A549 (cell line): ENCODE measurements at regions of chr17 and their contacts with region 1.

Region 1: GRCh38 chr17:82551779-82552457 is 32.4 kb downstream of the FOXK2 start:
- DNase-seq: peak; percentile 81 to 96
- ATAC-seq: peak; percentile 96 to 97
- H3K4me3 ChIP-seq: no peak overlapping the region
- H3K27ac ChIP-seq: no peak overlapping the region
- H3K4me1 ChIP-seq: peaks cover 27% of the 10 kb centered on the region
- CTCF ChIP-seq: peak; percentile 74
- EP300 ChIP-seq: no peak
- POLR2A ChIP-seq: no peak
- RAD21 ChIP-seq: peak; percentile 73 to 77

Region 2: GRCh38 chr17:82477934-82478333 is 74.0 kb before region 1 on chr17:
- CTCF ChIA-PET with region 1: interaction called, 22 read pairs
- POLR2A ChIA-PET with region 1: no interaction called
- DNase-seq: no peak
- ATAC-seq: no peak
- H3K4me3 ChIP-seq: no peak overlapping the region
- H3K27ac ChIP-seq: no peak overlapping the region
- H3K4me1 ChIP-seq: no peaks in the 10 kb centered on the region
- CTCF ChIP-seq: no peak
- EP300 ChIP-seq: no peak
- POLR2A ChIP-seq: no peak
- RAD21 ChIP-seq: no peak

Region 3: GRCh38 chr17:82494236-82495055 is 57.5 kb before region 1 on chr17:
- CTCF ChIA-PET with region 1: interaction called, 26 read pairs
- POLR2A ChIA-PET with region 1: no interaction called
- DNase-seq: peak; percentile 98 to 100
- ATAC-seq: peak; percentile 81 to 91
- H3K4me3 ChIP-seq: peak overlapping the region; percentile 26; the same call in 1 of the 3 replicates
- H3K27ac ChIP-seq: peak overlapping the region in 1 of 2 experiments; percentile 72; a peak in 3 of 6 replicates
- H3K4me1 ChIP-seq: peaks cover 33% of the 10 kb centered on the region
- CTCF ChIP-seq: peak; percentile 98
- EP300 ChIP-seq: no peak
- POLR2A ChIP-seq: no peak
- RAD21 ChIP-seq: peak in 1 of 2 experiments; percentile 40; a peak in 4 of 5 replicates

Region 4: GRCh38 chr17:82528484-82529265 is 23.2 kb before region 1 on chr17:
- CTCF ChIA-PET with region 1: interaction called, 17 read pairs
- POLR2A ChIA-PET with region 1: no interaction called
- DNase-seq: peak; percentile 82 to 85
- ATAC-seq: peak; percentile 96 to 100
- H3K4me3 ChIP-seq: no peak overlapping the region
- H3K27ac ChIP-seq: no peak overlapping the region
- H3K4me1 ChIP-seq: peaks cover 51% of the 10 kb centered on the region
- CTCF ChIP-seq: peak; percentile 66
- EP300 ChIP-seq: no peak
- POLR2A ChIP-seq: no peak
- RAD21 ChIP-seq: peak; percentile 59 to 76

Region 5: GRCh38 chr17:82565551-82565950 is 13.6 kb after region 1 on chr17:
- CTCF ChIA-PET with region 1: interaction called, 26 read pairs
- POLR2A ChIA-PET with region 1: no interaction called
- DNase-seq: no peak
- ATAC-seq: no peak
- H3K4me3 ChIP-seq: no peak overlapping the region
- H3K27ac ChIP-seq: no peak overlapping the region
- H3K4me1 ChIP-seq: peaks cover 61% of the 10 kb centered on the region
- CTCF ChIP-seq: no peak
- EP300 ChIP-seq: no peak
- POLR2A ChIP-seq: no peak
- RAD21 ChIP-seq: no peak

Region 6: DNA sequence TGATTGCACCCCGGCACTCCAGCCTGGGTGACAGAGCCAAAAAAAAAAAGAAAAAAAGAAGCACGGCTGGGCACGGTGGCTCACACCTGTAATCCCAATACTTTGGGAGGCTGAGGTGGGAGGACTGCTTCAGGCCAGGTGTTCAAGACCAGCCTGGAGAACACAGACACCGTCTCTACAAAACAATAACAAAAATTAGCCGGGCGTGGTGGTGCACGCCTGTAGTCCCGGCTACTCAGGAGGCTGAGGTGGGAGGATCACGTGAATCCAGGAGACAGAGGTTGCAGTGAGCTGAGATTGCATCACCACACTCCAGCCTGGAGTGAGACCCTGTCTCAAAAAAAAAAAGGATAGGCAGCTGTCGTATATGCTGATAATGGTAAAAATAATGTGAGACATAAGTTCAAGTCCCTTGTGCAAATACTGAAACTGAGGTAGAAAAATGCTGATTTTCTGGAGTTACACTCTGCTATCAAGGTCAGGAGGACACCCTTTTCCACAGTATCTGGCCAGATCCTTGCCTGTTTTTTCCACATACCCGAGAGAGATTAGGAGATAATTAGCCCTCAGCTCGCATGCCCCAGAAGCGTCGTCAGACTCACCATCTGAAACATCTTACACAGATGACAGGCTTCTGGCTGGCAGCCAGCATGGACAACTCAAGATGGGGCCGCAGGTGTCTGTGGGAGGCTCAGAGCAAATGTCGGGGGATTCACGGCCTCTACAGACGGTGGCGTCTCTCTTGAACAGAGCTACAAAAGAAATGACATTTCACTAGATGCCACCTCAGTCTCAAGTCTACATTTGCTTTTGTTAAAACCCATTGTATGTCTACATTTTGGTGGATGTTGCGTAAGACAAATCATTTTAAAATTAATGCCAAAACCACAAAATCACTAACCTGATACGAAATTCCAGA is 59.5 kb after region 1 on chr17:
- CTCF ChIA-PET with region 1: no interaction called
- POLR2A ChIA-PET with region 1: no interaction called
- DNase-seq: no peak
- ATAC-seq: no peak
- H3K4me3 ChIP-seq: no peak overlapping the region
- H3K27ac ChIP-seq: no peak overlapping the region
- H3K4me1 ChIP-seq: no peaks in the 10 kb centered on the region
- CTCF ChIP-seq: no peak
- EP300 ChIP-seq: no peak
- POLR2A ChIP-seq: no peak
- RAD21 ChIP-seq: no peak

Region 7: DNA sequence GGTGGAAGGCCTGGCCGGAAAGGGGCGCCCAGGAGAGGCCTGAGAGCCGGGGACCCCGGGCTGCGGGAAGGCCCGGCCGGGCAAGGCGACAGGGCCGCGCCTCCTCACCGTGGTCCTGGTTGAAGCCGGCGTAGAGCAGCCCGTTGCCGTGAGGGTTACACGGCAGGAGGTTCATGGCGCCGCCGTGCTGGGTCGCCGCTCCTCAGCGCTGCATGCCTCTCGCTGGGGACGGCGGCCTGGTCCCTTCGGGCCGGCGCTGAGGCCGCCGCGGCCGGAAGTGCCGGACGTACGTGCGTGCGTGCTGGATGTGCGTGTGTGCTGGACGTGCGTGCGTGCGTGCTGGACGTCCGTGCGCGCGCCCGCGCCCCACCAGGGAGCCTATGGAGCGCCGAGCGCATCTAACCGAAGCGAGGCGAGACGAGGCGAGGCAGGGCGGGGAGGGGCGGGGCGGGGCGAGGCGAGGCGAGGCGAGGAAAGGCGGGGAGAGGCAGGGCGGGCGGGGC is 96.3 kb after region 1 on chr17 and contains the start of gene WDR45B:
- CTCF ChIA-PET with region 1: no interaction called
- POLR2A ChIA-PET with region 1: no interaction called
- DNase-seq: peak; percentile 98 to 99
- ATAC-seq: peak; percentile 88 to 94
- H3K4me3 ChIP-seq: peak within 1 kb of the TSS; percentile 90
- H3K27ac ChIP-seq: peak within 1 kb of the TSS; percentile 91 to 95
- H3K4me1 ChIP-seq: peaks cover 23% of the 10 kb centered on the region
- CTCF ChIP-seq: no peak
- EP300 ChIP-seq: no peak
- POLR2A ChIP-seq: peak; percentile 98
- RAD21 ChIP-seq: no peak
- polyA plus RNA-seq, gene WDR45B: 124 and 138 TPM in 2 replicates